Heart right ventricle (tissue), 16 donors: ENCODE measurements at regions of chr10 and their contacts with region 1.

Region 1: GRCh38 chr10:84256510-84257342 is 11.9 kb downstream of the RGR start:
- DNase-seq: peak; percentile 46 to 60
- ATAC-seq: peak; percentile 10 to 75 (median 58)
- H3K4me3 ChIP-seq: no peak overlapping the region
- H3K27ac ChIP-seq: no peak overlapping the region
- H3K4me1 ChIP-seq: peaks cover 0 to 9% (median 0%) of the 10 kb centered on the region in 9 donors
- H3K27me3 ChIP-seq: peaks cover 0 to 41% (median 18%) of the 10 kb centered on the region in 7 donors
- CTCF ChIP-seq: peak; percentile 13 to 71 (median 63)

Region 2: GRCh38 chr10:84147347-84147746 is 109.4 kb before region 1 on chr10:
- intact Hi-C with region 1: loop called in 1 of 10 experiments (anchors 5 kb)
- DNase-seq: no peak
- ATAC-seq: no peak
- H3K4me3 ChIP-seq: no peak overlapping the region
- H3K27ac ChIP-seq: no peak overlapping the region
- H3K4me1 ChIP-seq: peaks cover 0 to 7% (median 0%) of the 10 kb centered on the region in 9 donors
- H3K27me3 ChIP-seq: no peaks in the 10 kb centered on the region
- CTCF ChIP-seq: no peak

Region 3: DNA sequence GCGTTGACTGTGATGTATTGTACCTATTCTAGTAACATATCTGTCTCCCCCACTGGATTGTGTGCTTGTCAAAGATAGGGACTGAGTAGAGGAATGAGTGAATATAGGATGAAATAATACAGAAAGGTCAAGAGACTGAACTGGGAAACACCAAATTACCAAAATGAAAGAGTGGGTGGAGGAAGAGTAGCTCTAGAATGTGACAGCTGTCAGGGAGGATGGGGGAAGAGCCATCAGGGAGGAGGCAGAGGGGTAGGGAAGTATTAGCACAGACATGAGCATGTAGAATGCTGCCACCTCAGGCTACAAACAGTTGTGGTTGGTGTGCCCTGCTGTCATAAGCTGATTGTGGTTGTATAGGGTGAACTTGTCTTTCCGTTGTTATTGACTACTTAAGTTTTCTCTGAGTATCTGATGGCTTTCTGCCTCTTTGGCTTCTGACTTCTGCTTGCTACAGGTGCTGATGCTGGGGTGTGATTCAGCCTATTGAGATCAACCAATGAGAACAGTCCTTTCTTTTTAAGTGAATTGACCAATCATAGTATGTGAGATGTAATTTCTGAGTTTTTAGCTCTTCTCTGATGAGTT is 77.2 kb after region 1 on chr10:
- intact Hi-C with region 1: no loop called
- DNase-seq: no peak
- ATAC-seq: peak in 3 of 8 donors; percentile 36 to 57 (median 43)
- H3K4me3 ChIP-seq: no peak overlapping the region
- H3K27ac ChIP-seq: peak overlapping the region in 1 of 10 donors; percentile 17
- H3K4me1 ChIP-seq: peaks cover 2 to 90% (median 82%) of the 10 kb centered on the region in 9 donors
- H3K27me3 ChIP-seq: no peaks in the 10 kb centered on the region
- CTCF ChIP-seq: no peak